ENCODE measurements at regions of chr11 and their contacts with region 1.

Region 1: GRCh38 chr11:17730608-17731462 is 3.7 kb upstream of the KCNC1 start:
- DNase-seq: peak; percentile 91
- ATAC-seq: peak; percentile 82
- H3K4me3 ChIP-seq: no peak overlapping the region
- H3K27ac ChIP-seq: no peak overlapping the region
- H3K4me1 ChIP-seq: no peaks in the 10 kb centered on the region
- H3K27me3 ChIP-seq: peaks cover 23% of the 10 kb centered on the region
- CTCF ChIP-seq: peak; percentile 71

Region 2: DNA sequence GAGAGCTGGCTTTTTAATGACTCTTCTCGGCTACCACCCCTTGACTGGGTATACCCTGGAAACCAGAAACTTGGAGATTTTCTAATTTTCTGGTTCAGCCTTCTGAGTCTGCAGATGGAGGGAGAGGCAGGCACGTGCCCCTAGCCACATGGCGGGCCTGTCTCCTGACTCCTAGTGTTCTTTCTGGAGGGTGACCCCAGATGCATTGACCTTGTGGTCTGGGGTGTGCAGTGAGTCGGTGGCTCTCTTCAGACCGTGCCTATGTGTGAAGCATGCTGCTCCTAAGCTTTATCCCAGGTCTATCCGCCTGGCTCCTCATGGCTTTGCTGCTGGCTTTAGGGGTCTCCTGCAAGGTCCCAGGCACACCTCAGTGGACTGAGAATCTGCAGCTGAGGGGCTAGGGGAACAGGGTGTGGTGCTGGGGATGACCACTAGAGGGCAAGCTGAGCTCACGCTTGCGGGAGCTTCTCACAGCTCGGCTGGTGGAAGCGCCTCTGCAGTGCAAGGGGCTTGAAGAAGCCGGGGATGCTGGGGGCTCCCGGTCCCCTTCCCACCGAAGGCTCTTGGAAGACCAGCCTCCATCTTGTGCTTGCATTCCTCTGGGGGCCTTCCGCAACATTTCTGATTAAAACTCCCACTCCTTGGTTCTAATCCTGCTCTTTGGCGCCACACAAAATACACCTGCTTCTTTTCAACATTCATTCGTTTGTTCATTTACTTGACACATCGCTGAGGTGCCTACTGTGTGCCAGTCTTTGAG is 132.0 kb before region 1 on chr11:
- CTCF ChIA-PET with region 1: interaction called, 23 read pairs
- POLR2A ChIA-PET with region 1: no interaction called
- intact Hi-C with region 1: loop called (anchors 1 kb)
- DNase-seq: peak; percentile 78
- ATAC-seq: peak; percentile 89
- H3K4me3 ChIP-seq: no peak overlapping the region
- H3K27ac ChIP-seq: no peak overlapping the region
- H3K4me1 ChIP-seq: no peaks in the 10 kb centered on the region
- H3K27me3 ChIP-seq: peaks cover 8% of the 10 kb centered on the region; the same call in 1 of the 2 replicates
- CTCF ChIP-seq: peak; percentile 90

Region 3: GRCh38 chr11:17747131-17747955 is 16.5 kb after region 1 on chr11:
- CTCF ChIA-PET with region 1: no interaction called
- POLR2A ChIA-PET with region 1: no interaction called
- intact Hi-C with region 1: no loop called
- DNase-seq: peak; percentile 29
- ATAC-seq: no peak
- H3K4me3 ChIP-seq: no peak overlapping the region
- H3K27ac ChIP-seq: no peak overlapping the region
- H3K4me1 ChIP-seq: peaks cover 15% of the 10 kb centered on the region
- H3K27me3 ChIP-seq: peaks cover 5% of the 10 kb centered on the region; the same call in 1 of the 2 replicates
- CTCF ChIP-seq: no peak

Region 4: DNA sequence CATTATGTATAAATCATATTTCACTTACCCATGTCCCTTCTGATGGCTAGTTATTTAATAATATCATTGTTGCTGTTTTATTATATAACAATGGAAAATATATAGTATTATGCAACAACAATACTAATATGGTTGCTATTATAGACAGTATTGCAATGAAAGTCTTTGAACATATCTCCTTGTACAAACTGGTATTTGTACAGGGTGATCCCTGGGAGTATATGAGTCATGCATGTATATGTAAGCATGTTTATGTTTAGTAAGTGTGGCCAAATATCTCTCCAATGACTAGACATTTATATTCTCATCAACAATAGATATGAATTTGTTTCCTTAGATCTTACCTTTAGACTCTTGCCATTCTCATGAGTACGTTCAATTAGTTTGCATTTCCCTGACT is 59.6 kb after region 1 on chr11:
- CTCF ChIA-PET with region 1: no interaction called
- POLR2A ChIA-PET with region 1: no interaction called
- intact Hi-C with region 1: no loop called
- DNase-seq: peak; percentile 77
- ATAC-seq: peak; percentile 67
- H3K4me3 ChIP-seq: no peak overlapping the region
- H3K27ac ChIP-seq: peak overlapping the region; percentile 65
- H3K4me1 ChIP-seq: peaks cover 30% of the 10 kb centered on the region
- H3K27me3 ChIP-seq: no peaks in the 10 kb centered on the region
- CTCF ChIP-seq: no peak

Region 5: GRCh38 chr11:17827006-17827405 is 96.2 kb after region 1 on chr11:
- CTCF ChIA-PET with region 1: interaction called, 3 read pairs
- POLR2A ChIA-PET with region 1: no interaction called
- intact Hi-C with region 1: loop called (anchors 5 kb)
- DNase-seq: peak; percentile 41
- ATAC-seq: no peak
- H3K4me3 ChIP-seq: no peak overlapping the region
- H3K27ac ChIP-seq: no peak overlapping the region
- H3K4me1 ChIP-seq: no peaks in the 10 kb centered on the region
- H3K27me3 ChIP-seq: no peaks in the 10 kb centered on the region
- CTCF ChIP-seq: peak; percentile 57

Region 6: DNA sequence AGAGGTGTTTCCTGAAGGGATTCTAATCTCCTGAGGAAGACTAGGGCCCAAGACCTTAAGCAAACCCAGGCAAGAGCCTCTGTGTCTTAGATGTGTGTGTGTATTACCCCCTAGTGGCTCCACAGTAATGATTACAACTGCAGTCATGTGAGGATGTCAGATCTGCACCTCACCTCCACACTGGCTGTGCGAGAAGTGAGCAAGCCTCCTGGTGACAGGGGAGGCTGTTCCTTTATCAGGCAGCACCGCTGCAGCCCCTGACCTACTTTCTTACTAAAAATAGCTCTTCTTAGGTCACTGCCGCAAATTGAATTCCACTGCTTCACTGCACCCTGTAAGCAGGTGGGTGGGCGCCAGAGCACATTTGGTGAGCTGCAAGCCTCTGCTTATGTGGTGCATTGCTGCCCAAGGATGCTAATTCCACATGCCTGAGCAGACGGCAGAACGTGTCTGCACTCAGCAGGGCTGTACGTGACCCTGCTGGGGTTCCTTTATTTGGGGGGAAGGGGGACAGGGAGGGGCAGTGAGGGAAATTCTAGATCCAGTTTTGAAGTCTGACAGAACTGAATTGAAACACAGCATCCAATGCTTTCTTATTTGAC is 116.1 kb after region 1 on chr11:
- CTCF ChIA-PET with region 1: interaction called, 21 read pairs
- POLR2A ChIA-PET with region 1: no interaction called
- intact Hi-C with region 1: loop called (anchors 2 kb)
- DNase-seq: peak; percentile 53
- ATAC-seq: peak; percentile 59
- H3K4me3 ChIP-seq: no peak overlapping the region
- H3K27ac ChIP-seq: peak overlapping the region; percentile 97
- H3K4me1 ChIP-seq: peaks cover 31% of the 10 kb centered on the region
- H3K27me3 ChIP-seq: no peaks in the 10 kb centered on the region
- CTCF ChIP-seq: peak; percentile 64

Region 7: GRCh38 chr11:17906436-17906835 is 175.6 kb after region 1 on chr11:
- CTCF ChIA-PET with region 1: interaction called, 4 read pairs
- POLR2A ChIA-PET with region 1: no interaction called
- intact Hi-C with region 1: loop called (anchors 10 kb)
- DNase-seq: peak; percentile 28
- ATAC-seq: peak; percentile 50; the same call in 1 of the 2 replicates
- H3K4me3 ChIP-seq: no peak overlapping the region
- H3K27ac ChIP-seq: no peak overlapping the region
- H3K4me1 ChIP-seq: no peaks in the 10 kb centered on the region
- H3K27me3 ChIP-seq: no peaks in the 10 kb centered on the region
- CTCF ChIP-seq: peak; percentile 41

Region 8: DNA sequence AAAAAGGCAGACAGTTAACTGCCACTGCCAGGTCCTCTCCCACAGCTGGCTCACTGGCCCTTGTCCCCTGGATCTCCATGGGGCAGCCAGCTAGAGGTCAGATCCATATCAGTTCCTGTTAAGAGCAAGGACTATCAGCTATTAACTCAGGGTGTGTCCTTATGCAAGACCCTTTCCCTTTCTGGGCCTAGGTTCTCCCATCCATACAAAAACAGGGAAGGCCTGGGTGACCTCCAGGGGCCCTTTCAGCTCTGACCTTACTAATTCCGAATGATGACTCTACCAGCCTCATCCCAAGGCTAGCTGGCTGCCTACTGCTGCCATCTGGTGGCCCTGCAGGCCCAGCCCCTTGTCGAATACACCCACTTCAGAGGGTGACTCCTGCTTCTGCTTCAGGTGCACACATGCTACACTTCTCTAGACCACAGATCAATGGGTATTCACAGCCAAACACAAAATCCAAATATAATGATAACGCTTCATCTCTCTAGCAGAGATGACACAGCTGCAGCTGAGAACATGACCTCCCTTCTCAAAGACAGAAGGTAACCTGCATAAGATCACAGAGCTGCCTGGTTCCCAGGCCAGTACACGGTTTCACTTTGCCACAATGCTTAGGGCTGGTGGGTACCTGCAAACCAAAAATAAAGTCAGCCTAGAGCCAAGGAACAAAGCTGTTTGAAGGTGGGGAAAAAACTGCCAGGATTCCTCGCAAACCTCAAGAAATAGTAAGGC is 247.9 kb after region 1 on chr11:
- CTCF ChIA-PET with region 1: interaction called, 23 read pairs
- POLR2A ChIA-PET with region 1: no interaction called
- intact Hi-C with region 1: loop called (anchors 1 kb)
- DNase-seq: peak; percentile 67
- ATAC-seq: peak; percentile 97
- H3K4me3 ChIP-seq: no peak overlapping the region
- H3K27ac ChIP-seq: no peak overlapping the region
- H3K4me1 ChIP-seq: no peaks in the 10 kb centered on the region
- H3K27me3 ChIP-seq: no peaks in the 10 kb centered on the region
- CTCF ChIP-seq: peak; percentile 84